GM12878 (cell line): ENCODE measurements at regions of chr1 and their contacts with region 1.

Region 1: DNA sequence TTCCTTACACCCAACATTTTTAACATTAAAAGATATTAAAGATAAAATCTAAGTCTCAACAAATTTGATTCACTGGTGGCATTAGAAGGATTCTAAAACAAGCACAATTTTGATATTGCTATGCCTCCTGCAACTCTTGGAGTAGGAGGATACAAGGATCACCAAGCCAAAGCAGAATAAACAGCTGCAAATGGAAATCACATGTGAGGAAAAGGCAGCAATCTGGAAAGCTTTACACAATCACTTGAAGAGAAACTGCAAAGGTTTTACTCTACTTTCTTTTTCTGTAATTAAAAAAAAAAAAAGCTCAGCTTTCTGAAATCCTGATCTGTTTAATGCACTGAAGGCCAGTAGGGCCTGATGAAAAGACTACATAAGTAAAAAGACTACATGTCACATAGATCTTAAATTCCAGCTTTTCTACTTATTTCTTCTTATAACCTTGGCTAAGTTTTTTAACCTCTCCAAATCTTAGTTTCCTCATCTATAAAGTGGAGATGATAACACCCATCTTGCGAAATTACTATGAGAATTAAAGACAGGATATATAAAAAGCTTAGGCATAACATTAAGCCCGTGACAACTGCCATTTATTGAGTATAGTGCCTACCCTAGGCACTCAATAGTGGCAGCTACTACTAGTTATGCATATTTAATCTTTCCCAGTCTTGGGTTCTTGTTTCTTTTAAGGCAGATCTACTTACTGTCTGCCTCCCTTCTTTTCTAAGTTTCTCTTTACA is 73.5 kb downstream of the EPS15 start:
- DNase-seq: no peak
- ATAC-seq: no peak; the same call in 2 of the 3 replicates
- H3K4me3 ChIP-seq: no peak overlapping the region
- H3K27ac ChIP-seq: peak overlapping the region; percentile 47
- H3K4me1 ChIP-seq: peaks cover 36% of the 10 kb centered on the region
- H3K27me3 ChIP-seq: no peaks in the 10 kb centered on the region
- CTCF ChIP-seq: no peak
- EP300 ChIP-seq: no peak
- POLR2A ChIP-seq: no peak
- RAD21 ChIP-seq: no peak

Region 2: GRCh38 chr1:51170342-51170741 is 275.2 kb before region 1 on chr1:
- CTCF ChIA-PET with region 1: no interaction called
- POLR2A ChIA-PET with region 1: no interaction called
- RAD21 ChIA-PET with region 1: no interaction called
- SMC1A ChIA-PET with region 1: no interaction called
- in situ Hi-C with region 1: no loop called
- intact Hi-C with region 1: no loop called
- DNase-seq: no peak
- ATAC-seq: no peak
- H3K4me3 ChIP-seq: no peak overlapping the region
- H3K27ac ChIP-seq: no peak overlapping the region
- H3K4me1 ChIP-seq: peaks cover 3% of the 10 kb centered on the region; the same call in 1 of the 2 replicates
- H3K27me3 ChIP-seq: no peaks in the 10 kb centered on the region; a peak in 2 of 4 replicates
- CTCF ChIP-seq: no peak
- EP300 ChIP-seq: no peak
- POLR2A ChIP-seq: no peak
- RAD21 ChIP-seq: no peak

Region 3: DNA sequence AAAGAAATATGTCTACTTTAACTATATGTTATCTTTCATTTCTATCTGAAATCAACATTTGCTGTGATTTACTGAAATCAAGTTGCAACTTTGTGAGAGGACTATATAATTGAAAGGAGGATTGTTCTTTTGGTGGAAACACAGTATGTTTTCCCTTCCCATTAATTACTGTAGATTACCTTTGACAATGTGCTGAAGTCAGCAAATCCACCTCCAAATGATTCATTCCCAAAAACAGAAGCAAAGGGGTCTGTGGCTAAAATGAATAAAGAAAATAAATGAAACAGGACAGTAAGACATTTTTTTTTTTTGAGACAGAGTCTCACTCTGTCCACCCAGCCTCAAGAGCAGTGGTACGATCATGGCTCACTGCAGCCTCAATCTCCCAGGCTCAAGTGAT is 79.7 kb before region 1 on chr1:
- CTCF ChIA-PET with region 1: no interaction called
- POLR2A ChIA-PET with region 1: no interaction called
- RAD21 ChIA-PET with region 1: no interaction called
- SMC1A ChIA-PET with region 1: no interaction called
- in situ Hi-C with region 1: no loop called
- intact Hi-C with region 1: no loop called
- DNase-seq: no peak
- ATAC-seq: no peak
- H3K4me3 ChIP-seq: no peak overlapping the region
- H3K27ac ChIP-seq: no peak overlapping the region
- H3K4me1 ChIP-seq: no peaks in the 10 kb centered on the region
- H3K27me3 ChIP-seq: no peaks in the 10 kb centered on the region
- CTCF ChIP-seq: no peak
- EP300 ChIP-seq: no peak
- POLR2A ChIP-seq: no peak
- RAD21 ChIP-seq: no peak

Region 4: DNA sequence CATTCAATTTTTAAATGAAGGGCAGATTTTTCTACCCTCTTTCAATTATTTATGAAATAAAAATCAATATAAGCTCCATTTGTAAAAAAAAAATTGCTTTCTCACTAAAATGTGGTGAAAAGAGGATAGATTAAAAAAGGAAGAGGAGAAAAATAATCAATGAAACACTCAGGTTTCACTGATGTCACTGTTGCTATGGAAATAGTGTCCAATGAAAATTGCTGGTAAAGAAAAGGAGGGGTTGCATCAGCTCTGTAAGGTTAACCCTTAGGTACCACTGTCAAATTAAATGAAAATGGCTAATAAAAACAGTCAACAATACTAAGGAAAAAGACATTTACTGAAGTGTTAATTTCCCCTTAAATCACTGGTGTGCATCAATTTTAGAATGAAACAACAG is 23.6 kb before region 1 on chr1:
- CTCF ChIA-PET with region 1: no interaction called
- POLR2A ChIA-PET with region 1: interaction called, 4 read pairs
- RAD21 ChIA-PET with region 1: no interaction called
- SMC1A ChIA-PET with region 1: interaction called, 14 read pairs
- in situ Hi-C with region 1: no loop called
- intact Hi-C with region 1: no loop called
- DNase-seq: no peak
- ATAC-seq: peak; percentile 88
- H3K4me3 ChIP-seq: no peak overlapping the region
- H3K27ac ChIP-seq: no peak overlapping the region
- H3K4me1 ChIP-seq: no peaks in the 10 kb centered on the region
- H3K27me3 ChIP-seq: no peaks in the 10 kb centered on the region
- CTCF ChIP-seq: no peak
- EP300 ChIP-seq: no peak
- POLR2A ChIP-seq: no peak
- RAD21 ChIP-seq: no peak

Region 5: DNA sequence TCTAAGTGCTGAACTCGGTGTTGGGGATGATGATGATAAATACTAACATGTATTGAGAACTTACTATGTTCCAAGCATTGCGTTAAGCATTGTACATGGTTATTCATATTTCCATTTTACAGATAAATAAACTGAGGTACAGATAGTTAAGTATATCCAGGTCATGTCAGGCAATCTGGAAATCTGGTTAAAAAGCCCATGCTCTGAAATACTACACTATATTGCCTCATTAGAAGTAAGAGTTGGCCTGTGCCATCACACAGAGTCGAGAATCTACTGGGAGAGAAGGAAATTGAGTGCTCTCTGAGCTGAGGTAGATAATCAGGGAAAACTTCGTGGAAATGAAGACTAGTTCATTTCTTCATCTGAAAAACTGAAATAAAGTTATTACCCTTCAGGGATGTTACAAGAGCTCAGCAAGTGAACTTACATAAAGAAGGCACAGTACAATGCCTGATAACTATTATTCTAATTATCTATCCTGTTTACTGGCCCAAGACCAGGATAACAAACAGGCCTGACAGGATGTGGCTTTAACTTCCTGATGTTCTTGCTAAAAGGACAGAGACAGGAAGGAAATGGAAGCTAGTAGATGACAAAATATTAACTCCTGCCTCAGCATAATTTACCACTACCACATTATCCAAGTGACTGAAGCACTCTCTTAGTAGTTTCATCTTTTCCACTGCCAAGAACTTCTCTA is 12.1 kb before region 1 on chr1:
- CTCF ChIA-PET with region 1: interaction called, 3 read pairs
- POLR2A ChIA-PET with region 1: interaction called, 5 read pairs
- RAD21 ChIA-PET with region 1: interaction called, 3 read pairs
- SMC1A ChIA-PET with region 1: interaction called, 10 read pairs
- in situ Hi-C with region 1: no loop called
- intact Hi-C with region 1: no loop called
- DNase-seq: no peak
- ATAC-seq: no peak; the same call in 2 of the 3 replicates
- H3K4me3 ChIP-seq: no peak overlapping the region
- H3K27ac ChIP-seq: peak overlapping the region; percentile 42; the same call in 1 of the 2 replicates
- H3K4me1 ChIP-seq: peaks cover 16% of the 10 kb centered on the region
- H3K27me3 ChIP-seq: no peaks in the 10 kb centered on the region
- CTCF ChIP-seq: no peak
- EP300 ChIP-seq: no peak
- POLR2A ChIP-seq: no peak
- RAD21 ChIP-seq: no peak

Region 6: GRCh38 chr1:51491166-51491981 is 45.9 kb after region 1 on chr1:
- CTCF ChIA-PET with region 1: interaction called, 3 read pairs
- POLR2A ChIA-PET with region 1: interaction called, 5 read pairs
- RAD21 ChIA-PET with region 1: interaction called, 7 read pairs
- SMC1A ChIA-PET with region 1: interaction called, 21 read pairs
- in situ Hi-C with region 1: no loop called
- intact Hi-C with region 1: no loop called
- DNase-seq: no peak
- ATAC-seq: peak; percentile 75
- H3K4me3 ChIP-seq: peak overlapping the region; percentile 69; the same call in 1 of the 2 replicates
- H3K27ac ChIP-seq: peak overlapping the region; percentile 72
- H3K4me1 ChIP-seq: peaks cover 45% of the 10 kb centered on the region
- H3K27me3 ChIP-seq: no peaks in the 10 kb centered on the region
- CTCF ChIP-seq: no peak
- EP300 ChIP-seq: 0 out of 4 replicates have a peak, but pooled peaks of 1 of the 2 experiments have one; percentile 3
- POLR2A ChIP-seq: no peak
- RAD21 ChIP-seq: no peak

Region 7: GRCh38 chr1:51512606-51513005 is 67.1 kb after region 1 on chr1:
- CTCF ChIA-PET with region 1: interaction called, 4 read pairs
- POLR2A ChIA-PET with region 1: interaction called, 3 read pairs
- RAD21 ChIA-PET with region 1: interaction called, 7 read pairs
- SMC1A ChIA-PET with region 1: interaction called, 30 read pairs
- in situ Hi-C with region 1: no loop called
- intact Hi-C with region 1: loop called (anchors 5 kb)
- DNase-seq: no peak
- ATAC-seq: peak; percentile 19
- H3K4me3 ChIP-seq: peak overlapping the region; percentile 37; the same call in 1 of the 2 replicates
- H3K27ac ChIP-seq: peak overlapping the region; percentile 83
- H3K4me1 ChIP-seq: peaks cover 24% of the 10 kb centered on the region
- H3K27me3 ChIP-seq: no peaks in the 10 kb centered on the region
- CTCF ChIP-seq: no peak
- EP300 ChIP-seq: no peak
- POLR2A ChIP-seq: no peak
- RAD21 ChIP-seq: no peak